ENCODE measurements at regions of chr20 and their contacts with region 1.

Region 1: DNA sequence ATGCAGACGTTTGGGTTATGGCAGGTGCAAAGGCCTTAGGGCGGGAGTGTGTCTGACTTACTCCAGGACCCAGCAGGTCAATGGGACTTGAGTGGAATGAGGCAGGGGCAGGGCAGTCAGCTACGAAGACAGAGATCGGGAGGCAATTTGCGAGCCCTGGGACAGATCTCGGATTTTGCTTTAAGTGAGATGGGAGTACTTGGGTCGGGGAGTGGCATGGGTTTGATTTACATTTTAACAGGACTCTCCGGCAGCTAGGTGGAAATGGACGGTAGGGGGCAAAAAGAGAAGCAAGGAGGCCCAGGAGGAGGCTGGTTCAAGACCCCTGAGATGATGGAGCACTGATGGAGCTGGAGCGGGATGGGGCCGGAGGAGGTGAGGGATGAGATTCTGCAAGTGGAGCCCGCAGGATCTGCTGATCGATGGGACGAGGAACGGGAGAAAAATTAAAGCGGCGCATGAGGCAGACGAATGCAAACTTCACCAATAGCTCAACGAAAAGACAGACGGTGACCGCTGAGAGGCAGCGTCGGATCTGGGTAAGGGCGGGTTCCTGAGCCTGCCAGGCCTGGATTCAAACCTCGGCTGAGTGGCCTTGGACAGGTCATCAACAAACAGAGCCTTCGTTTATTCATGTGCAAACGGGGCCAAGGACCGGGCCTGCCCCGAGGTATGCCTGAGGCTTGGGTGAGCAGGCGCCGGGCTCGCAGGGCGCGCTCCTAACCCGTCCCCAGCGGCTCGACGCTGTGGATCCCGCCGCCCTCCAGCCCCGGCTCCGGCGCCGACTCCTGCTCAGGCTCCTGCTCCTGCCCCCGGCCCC is 756 bp upstream of the RBCK1 start:
- DNase-seq: peak; percentile 88 to 92
- ATAC-seq: peak; percentile 90
- H3K4me3 ChIP-seq: peak overlapping the region; percentile 18 to 31
- H3K27ac ChIP-seq: peak overlapping the region in 1 of 2 donors; percentile 67
- H3K4me1 ChIP-seq: no peaks in the 10 kb centered on the region
- H3K27me3 ChIP-seq: no peaks in the 10 kb centered on the region

Region 2: DNA sequence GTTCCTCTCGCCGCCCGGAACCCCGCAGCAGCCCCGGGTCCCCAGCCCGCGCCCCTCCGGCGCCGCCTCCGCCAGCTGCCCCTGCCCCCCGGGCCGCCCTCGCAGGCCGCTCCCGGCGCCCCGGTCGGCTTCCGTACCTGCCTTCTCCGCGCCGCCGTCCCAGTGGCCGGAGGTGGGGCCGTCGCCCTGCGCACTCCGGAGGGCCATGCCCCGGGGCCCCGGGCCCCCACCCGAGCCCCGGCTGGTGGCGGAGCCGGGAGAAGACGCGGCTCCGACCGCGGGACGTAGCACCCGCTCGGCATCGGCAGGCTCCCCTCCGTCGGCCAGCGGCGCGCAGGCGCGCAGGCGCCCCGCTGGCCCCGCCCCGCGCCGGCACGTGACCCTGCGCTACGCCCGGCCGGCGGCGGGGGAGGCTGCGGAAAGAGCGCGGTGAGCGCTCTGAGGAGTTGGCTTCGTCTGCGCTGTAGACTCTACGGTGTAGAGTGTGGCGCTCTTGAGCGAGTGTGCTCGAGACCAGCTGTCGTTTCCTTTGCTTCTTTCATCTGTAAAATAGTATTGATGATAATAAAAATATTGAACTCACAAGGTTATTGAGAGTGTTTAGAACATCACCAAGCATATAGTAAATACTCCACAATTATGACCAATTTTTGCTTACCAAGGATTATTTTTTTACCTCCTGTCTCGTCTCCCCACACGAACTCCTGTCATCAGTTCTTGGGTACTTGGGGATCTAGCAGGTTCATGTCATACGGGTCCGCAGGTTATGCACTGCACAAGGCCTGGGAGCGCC is 55.1 kb after region 1 on chr20 and contains the start of gene TBC1D20:
- intact Hi-C with region 1: loop called in 1 of 2 experiments (anchors 5 kb)
- DNase-seq: peak; percentile 90 to 94
- ATAC-seq: peak; percentile 98
- H3K4me3 ChIP-seq: peak within 1 kb of the TSS; percentile 76 to 99
- H3K27ac ChIP-seq: peak within 1 kb of the TSS; percentile 57 to 76
- H3K4me1 ChIP-seq: peaks cover 2 to 3% of the 10 kb centered on the region in 2 donors
- H3K27me3 ChIP-seq: no peaks in the 10 kb centered on the region
- total RNA-seq, gene TBC1D20: 27.2 to 39.1 TPM

Region 3: DNA sequence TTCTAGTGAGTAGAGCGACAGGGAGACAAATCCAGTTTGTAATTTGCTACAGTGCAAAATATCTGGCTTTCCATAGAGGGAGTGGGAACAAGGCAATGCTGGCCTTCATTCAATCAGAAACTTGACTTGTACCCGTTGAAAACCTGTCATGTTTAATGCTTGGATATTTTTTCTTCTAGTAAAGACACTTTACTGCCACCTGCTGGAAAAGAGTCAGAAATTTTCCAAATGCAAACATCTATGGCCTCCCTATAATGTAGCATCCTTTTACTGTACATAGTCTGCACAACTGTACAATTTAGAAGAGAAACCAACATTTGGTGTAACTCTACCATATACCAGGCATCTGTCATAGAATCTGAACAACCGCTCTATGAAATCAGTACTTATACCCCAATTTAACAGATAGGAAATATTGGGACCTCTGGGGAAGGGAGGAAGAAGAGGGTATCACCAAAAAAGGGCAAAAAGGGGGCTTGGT is 71.6 kb after region 1 on chr20:
- intact Hi-C with region 1: loop called (anchors 5 to 10 kb)
- DNase-seq: no peak
- ATAC-seq: peak; percentile 56
- H3K4me3 ChIP-seq: no peak overlapping the region
- H3K27ac ChIP-seq: no peak overlapping the region
- H3K4me1 ChIP-seq: no peaks in the 10 kb centered on the region
- H3K27me3 ChIP-seq: no peaks in the 10 kb centered on the region

Region 4: GRCh38 chr20:543369-544152 is 136.2 kb after region 1 on chr20 and contains the start of gene CSNK2A1:
- intact Hi-C with region 1: loop called (anchors 2 to 5 kb)
- DNase-seq: peak; percentile 96 to 97
- ATAC-seq: peak; percentile 99
- H3K4me3 ChIP-seq: peak within 1 kb of the TSS; percentile 90 to 99
- H3K27ac ChIP-seq: peak within 1 kb of the TSS in 1 of 2 donors; percentile 91
- H3K4me1 ChIP-seq: peaks cover 0 to 8% of the 10 kb centered on the region in 2 donors
- H3K27me3 ChIP-seq: no peaks in the 10 kb centered on the region
- total RNA-seq, gene CSNK2A1: 73.5 to 98.2 TPM

Region 5: DNA sequence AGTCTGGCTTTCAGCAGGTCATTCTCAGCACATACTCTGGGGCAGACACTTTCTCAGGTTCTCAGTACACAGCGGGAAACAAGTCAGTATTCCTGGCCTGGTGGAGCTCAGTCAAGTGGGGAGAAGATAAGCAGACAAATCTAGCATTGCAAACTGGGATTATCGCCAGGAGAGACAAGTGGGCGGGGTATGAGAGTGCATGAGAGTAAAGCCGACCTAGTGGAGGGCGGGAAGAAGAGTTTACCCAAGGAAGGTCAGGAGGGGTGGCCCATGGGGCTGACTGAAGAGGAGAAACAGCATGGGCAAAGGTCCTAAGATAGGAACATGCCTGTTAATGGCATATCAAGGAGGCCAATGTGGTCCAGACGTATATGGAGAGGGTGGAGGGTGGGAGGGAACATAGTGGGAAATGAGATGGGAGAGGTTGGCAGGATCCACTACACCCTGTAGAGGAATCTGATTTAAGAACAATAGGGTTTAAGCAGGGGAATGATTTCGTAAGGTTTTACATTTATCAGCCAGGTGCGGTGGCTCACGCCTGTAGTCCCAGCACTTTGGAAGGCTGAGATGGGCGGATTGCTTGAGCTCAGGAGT is 148.7 kb after region 1 on chr20:
- intact Hi-C with region 1: no loop called
- DNase-seq: no peak
- ATAC-seq: no peak
- H3K4me3 ChIP-seq: no peak overlapping the region
- H3K27ac ChIP-seq: no peak overlapping the region
- H3K4me1 ChIP-seq: no peaks in the 10 kb centered on the region
- H3K27me3 ChIP-seq: peaks cover 0 to 5% of the 10 kb centered on the region in 2 donors

Region 6: GRCh38 chr20:653110-653589 is 245.8 kb after region 1 on chr20 and contains the start of gene SRXN1:
- intact Hi-C with region 1: loop called in 1 of 2 experiments (anchors 5 kb)
- DNase-seq: peak; percentile 94 to 97
- ATAC-seq: peak; percentile 96
- H3K4me3 ChIP-seq: peak within 1 kb of the TSS; percentile 22 to 67
- H3K27ac ChIP-seq: peak within 1 kb of the TSS; percentile 6 to 65
- H3K4me1 ChIP-seq: no peaks in the 10 kb centered on the region
- H3K27me3 ChIP-seq: no peaks in the 10 kb centered on the region
- total RNA-seq, gene SRXN1: 17.7 to 18.5 TPM